Common myeloid progenitor, CD34-positive (primary cell): ENCODE measurements at regions of chr14 and their contacts with region 1.

Region 1: DNA sequence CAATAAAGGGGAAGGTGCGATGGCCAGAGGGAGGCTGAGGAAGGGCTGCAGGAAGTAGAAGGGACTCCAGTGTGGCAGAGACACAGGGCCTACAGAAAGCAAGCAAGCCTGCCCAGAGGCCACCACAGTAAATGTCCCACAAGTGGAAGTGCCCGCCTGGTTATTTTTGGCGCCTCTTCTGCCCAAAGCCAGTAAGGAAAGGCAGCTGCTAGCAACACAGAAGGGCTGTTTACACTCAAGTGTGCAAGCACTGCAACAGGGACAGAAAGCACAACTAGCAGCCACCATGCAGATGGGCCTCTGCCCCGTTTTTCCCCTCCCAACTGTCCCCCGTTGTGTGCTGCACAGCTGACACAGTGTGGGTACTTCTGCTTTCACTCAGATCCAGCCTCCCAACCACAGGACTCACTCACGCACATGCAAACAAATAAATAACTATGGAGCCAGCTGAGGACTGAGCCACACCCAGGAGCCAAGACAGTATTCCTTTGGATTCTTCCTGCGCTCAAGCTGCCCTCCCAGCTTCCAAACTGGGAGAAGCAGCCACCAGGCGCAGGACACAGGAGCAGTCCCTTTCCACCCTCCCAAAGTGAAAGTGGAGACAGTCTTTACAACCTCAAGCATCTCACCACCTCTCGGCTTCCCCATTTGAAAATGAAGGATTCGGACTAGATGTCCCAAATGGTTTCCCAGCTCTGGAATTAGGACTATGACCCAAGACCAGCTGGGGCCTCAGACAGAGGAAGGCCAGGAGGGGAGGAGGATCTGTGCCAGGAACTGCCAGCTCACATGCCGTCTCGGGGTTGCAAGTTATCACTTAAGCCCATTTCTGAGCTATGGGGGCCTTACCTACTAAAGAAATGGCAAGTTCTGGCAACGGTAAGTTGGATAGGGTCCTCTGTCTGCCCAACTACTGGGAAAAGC is 40.0 kb upstream of the PNMA1 start:
- DNase-seq: peak; percentile 88 to 97 (median 97)
- H3K4me3 ChIP-seq: peak overlapping the region; percentile 20 to 84 (median 59)
- H3K27ac ChIP-seq: peak overlapping the region; percentile 99
- H3K4me1 ChIP-seq: peaks cover 37 to 98% (median 96%) of the 10 kb centered on the region in 4 experiments
- H3K27me3 ChIP-seq: no peaks in the 10 kb centered on the region

Region 2: DNA sequence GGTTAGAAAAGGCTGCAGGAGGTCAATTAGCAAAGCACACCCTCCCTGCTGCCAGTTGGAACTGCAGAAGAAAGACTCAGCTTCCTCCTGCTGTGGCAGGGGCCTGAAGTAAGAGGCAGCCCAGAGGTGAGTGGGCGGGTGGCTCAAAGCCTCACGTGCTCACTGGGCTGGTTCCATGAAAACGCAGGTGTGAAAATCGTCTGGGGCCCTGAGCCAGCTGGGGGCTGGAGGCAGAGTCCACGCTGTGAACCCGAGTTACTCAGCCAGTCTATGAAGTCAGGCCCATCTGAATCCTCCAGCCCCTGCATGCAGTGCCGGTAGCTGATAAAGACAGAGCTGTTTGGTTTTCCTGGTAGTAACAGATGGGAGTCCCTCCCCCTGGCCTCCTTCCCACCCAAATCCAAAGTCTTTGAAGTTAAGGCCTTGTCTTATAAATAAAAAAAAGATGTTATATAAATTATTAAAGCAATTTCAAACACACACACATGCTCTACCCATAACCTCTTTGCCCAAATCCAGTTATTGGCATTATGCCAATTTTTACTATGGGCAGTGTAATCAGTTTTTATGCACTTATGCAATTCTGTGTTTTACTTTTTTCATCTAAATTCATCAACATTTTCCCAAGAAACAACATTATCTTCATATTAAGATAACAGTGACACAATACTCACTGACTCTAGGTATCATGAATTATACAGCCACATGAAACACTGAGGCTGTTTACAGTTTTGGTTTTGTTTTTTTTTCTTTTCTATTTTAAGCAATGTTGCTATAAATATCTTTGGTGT is 17.8 kb after region 1 on chr14:
- CTCF ChIA-PET with region 1: interaction called, 25 read pairs
- POLR2A ChIA-PET with region 1: interaction called, 17 read pairs
- DNase-seq: peak; percentile 55 to 88 (median 78)
- H3K4me3 ChIP-seq: peak overlapping the region in 3 of 7 experiments; percentile 13 to 37 (median 26)
- H3K27ac ChIP-seq: peak overlapping the region in 1 of 2 experiments; percentile 75
- H3K4me1 ChIP-seq: peaks cover 20 to 57% (median 42%) of the 10 kb centered on the region in 4 experiments
- H3K27me3 ChIP-seq: no peaks in the 10 kb centered on the region